Panc1 (cell line): ENCODE measurements at regions of chr7 and their contacts with region 1.

Region 1: GRCh38 chr7:66304536-66304935 is 99.4 kb downstream of the TPST1 start:
- DNase-seq: no peak
- ATAC-seq: no peak
- H3K4me3 ChIP-seq: no peak overlapping the region
- H3K27ac ChIP-seq: no peak overlapping the region; the same call in 1 of the 2 replicates
- H3K4me1 ChIP-seq: peaks cover 10% of the 10 kb centered on the region; the same call in 1 of the 2 replicates
- H3K27me3 ChIP-seq: no peaks in the 10 kb centered on the region
- CTCF ChIP-seq: no peak

Region 2: GRCh38 chr7:65390588-65390987 is 913.9 kb before region 1 on chr7:
- CTCF ChIA-PET with region 1: no interaction called
- POLR2A ChIA-PET with region 1: no interaction called
- in situ Hi-C with region 1: no loop called
- intact Hi-C with region 1: no loop called
- DNase-seq: no peak
- ATAC-seq: peak; percentile 66; the same call in 1 of the 2 replicates
- H3K4me3 ChIP-seq: no peak overlapping the region
- H3K27ac ChIP-seq: no peak overlapping the region
- H3K4me1 ChIP-seq: no peaks in the 10 kb centered on the region
- H3K27me3 ChIP-seq: no peaks in the 10 kb centered on the region
- CTCF ChIP-seq: no peak

Region 3: DNA sequence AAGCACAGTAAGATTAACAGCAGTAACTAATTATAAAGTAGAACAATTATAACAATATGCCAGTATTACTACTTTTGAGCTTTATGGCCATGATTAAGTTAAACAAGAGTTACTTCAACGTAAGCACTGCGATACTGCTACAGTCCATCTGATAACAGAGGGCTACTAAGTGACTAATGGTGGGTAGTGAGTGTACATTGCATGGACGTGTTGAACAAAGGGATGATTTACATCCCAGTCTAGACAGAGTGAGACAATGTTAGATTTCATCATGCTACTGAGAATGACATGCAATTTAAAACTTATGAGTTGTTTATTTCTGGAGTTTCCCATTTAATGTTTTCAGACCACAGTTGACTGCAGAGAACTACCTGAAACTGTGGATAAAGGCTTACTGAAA is 53.8 kb before region 1 on chr7:
- CTCF ChIA-PET with region 1: no interaction called
- POLR2A ChIA-PET with region 1: interaction called, 11 read pairs
- in situ Hi-C with region 1: no loop called
- intact Hi-C with region 1: no loop called
- DNase-seq: no peak
- ATAC-seq: peak; percentile 76; the same call in 1 of the 2 replicates
- H3K4me3 ChIP-seq: no peak overlapping the region
- H3K27ac ChIP-seq: no peak overlapping the region
- H3K4me1 ChIP-seq: 0 out of 2 replicates have a peak, but pooled peaks cover 6% of the 10 kb centered on the region
- H3K27me3 ChIP-seq: no peaks in the 10 kb centered on the region
- CTCF ChIP-seq: no peak